PC-3 (cell line): ENCODE measurements at regions of chr13 and their contacts with region 1.

Region 1: DNA sequence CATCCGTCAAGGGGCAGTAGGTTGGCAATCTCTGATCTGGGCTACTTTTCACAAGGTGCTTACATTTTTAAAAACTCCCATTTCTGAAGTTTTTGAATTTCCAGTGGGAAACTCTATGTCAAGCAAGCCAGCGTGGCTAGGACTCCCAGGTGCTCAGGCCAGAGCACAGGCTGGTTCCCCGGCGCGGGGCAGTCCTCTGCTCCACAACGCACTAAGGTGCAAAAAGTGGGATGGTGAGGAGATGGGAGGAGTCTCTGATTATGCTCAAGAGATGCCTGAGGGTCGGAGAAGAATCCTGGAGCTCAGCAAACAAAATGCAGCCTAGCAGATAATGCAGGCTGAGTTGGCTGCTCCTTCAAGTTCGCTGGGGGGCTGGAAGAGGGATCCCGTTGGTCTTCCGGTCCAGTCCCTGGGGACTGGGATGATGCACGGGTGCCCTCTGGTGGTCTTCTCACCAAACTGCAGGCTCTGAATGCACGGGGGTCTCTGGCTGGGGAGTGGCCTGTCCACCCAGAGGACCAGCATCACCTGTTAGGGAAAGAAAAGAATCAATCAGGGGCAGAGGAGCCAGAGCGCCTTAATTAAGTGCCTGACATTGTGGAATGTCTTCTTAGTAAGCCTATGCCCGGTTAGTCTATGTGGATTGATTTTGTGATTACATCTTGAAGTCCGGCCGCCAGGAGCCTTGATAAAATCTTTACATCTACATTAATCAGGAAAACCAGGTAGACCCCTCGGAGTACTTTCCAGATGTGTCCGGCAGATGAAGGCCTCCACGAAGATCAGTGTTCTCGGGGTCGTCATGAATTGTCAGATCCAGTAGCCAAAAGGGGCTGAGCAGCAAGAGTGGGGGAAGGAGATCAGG is 244.4 kb upstream of the MAB21L1 start:
- DNase-seq: peak; percentile 70
- ATAC-seq: peak; percentile 60
- H3K4me3 ChIP-seq: peak overlapping the region; percentile 58
- H3K27ac ChIP-seq: no peak overlapping the region
- H3K4me1 ChIP-seq: peaks cover 17% of the 10 kb centered on the region
- H3K27me3 ChIP-seq: no peaks in the 10 kb centered on the region
- CTCF ChIP-seq: peak; percentile 95

Region 2: DNA sequence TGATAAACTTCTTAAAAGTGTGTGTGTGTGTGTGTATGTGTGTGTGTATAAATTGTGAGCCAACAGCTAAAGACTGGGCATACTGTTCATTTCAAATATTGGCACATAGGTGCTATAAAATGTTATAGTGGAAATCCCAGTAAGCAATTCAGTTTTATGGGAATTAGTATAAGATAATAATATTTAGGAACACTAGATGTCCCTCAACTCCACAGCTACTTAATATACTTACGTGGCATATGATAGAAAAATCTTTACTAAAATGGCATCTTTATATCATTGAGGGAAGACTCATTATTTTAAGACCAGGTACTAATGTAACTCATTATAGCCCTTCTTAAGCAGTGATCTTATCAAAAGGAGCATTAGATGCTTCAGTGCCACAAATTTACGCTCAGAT is 510.7 kb before region 1 on chr13:
- CTCF ChIA-PET with region 1: interaction called, 3 read pairs
- POLR2A ChIA-PET with region 1: no interaction called
- intact Hi-C with region 1: loop called (anchors 1 kb)
- DNase-seq: peak; percentile 11
- ATAC-seq: peak; percentile 43; the same call in 1 of the 2 replicates
- H3K4me3 ChIP-seq: no peak overlapping the region
- H3K27ac ChIP-seq: no peak overlapping the region
- H3K4me1 ChIP-seq: no peaks in the 10 kb centered on the region
- H3K27me3 ChIP-seq: no peaks in the 10 kb centered on the region
- CTCF ChIP-seq: peak; percentile 44

Region 3: DNA sequence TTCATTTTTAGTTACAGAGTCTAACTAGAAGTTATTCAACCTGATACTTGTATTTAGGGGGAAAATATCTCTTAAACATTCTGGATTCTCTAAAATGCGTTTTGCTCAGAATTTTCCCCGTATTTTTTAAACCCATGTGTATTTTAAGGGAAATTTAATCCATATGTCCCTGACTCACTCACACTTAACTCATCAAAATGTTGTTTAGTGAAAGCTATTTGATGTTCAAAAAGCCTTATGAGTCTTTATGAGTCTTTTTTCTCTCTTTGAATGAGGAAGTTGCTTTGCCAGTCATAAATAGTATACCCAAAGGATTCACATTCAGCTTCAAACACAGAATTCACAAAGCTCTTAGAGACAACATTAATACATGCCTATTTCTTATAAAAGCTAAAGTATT is 260.9 kb before region 1 on chr13:
- CTCF ChIA-PET with region 1: no interaction called
- POLR2A ChIA-PET with region 1: no interaction called
- intact Hi-C with region 1: no loop called
- DNase-seq: no peak
- ATAC-seq: no peak
- H3K4me3 ChIP-seq: no peak overlapping the region
- H3K27ac ChIP-seq: no peak overlapping the region
- H3K4me1 ChIP-seq: no peaks in the 10 kb centered on the region
- H3K27me3 ChIP-seq: no peaks in the 10 kb centered on the region
- CTCF ChIP-seq: no peak

Region 4: GRCh38 chr13:35789335-35790165 is 68.6 kb after region 1 on chr13:
- CTCF ChIA-PET with region 1: interaction called, 5 read pairs
- POLR2A ChIA-PET with region 1: no interaction called
- intact Hi-C with region 1: loop called (anchors 10 kb)
- DNase-seq: peak; percentile 52
- ATAC-seq: peak; percentile 67
- H3K4me3 ChIP-seq: no peak overlapping the region
- H3K27ac ChIP-seq: no peak overlapping the region
- H3K4me1 ChIP-seq: 0 out of 2 replicates have a peak, but pooled peaks cover 14% of the 10 kb centered on the region
- H3K27me3 ChIP-seq: no peaks in the 10 kb centered on the region
- CTCF ChIP-seq: peak; percentile 60

Region 5: DNA sequence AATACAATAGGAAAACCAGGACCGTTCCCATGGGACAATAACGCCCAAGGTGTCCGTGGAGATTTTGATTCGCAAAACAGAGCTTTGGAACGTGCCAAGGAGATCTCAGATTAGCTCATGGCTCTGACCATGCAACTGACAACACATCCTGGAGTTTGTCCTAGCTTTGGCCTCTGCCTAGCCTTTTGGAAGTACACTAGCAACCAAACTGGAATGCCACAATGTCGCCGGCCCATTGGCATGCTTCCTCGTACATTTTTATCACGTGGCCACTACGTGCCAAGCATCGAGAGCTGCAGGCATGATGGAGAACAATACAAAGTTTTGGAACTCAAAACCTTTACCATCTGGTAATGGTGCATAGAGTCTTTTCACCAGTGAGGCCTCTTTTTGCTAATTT is 153.8 kb after region 1 on chr13:
- CTCF ChIA-PET with region 1: no interaction called
- POLR2A ChIA-PET with region 1: no interaction called
- intact Hi-C with region 1: no loop called
- DNase-seq: no peak
- ATAC-seq: no peak
- H3K4me3 ChIP-seq: no peak overlapping the region
- H3K27ac ChIP-seq: no peak overlapping the region
- H3K4me1 ChIP-seq: no peaks in the 10 kb centered on the region
- H3K27me3 ChIP-seq: no peaks in the 10 kb centered on the region
- CTCF ChIP-seq: no peak

Region 6: GRCh38 chr13:37561031-37561430 is 1840.1 kb after region 1 on chr13:
- CTCF ChIA-PET with region 1: no interaction called
- POLR2A ChIA-PET with region 1: no interaction called
- intact Hi-C with region 1: no loop called
- DNase-seq: no peak
- ATAC-seq: no peak
- H3K4me3 ChIP-seq: no peak overlapping the region
- H3K27ac ChIP-seq: no peak overlapping the region
- H3K4me1 ChIP-seq: no peaks in the 10 kb centered on the region
- H3K27me3 ChIP-seq: peaks cover 21% of the 10 kb centered on the region
- CTCF ChIP-seq: no peak